GM10248 (cell line): ENCODE measurements at regions of chr7 and their contacts with region 1.

Region 1: GRCh38 chr7:24948739-24949138 is 31.2 kb downstream of the OSBPL3 start:
- DNase-seq: no peak
- CTCF ChIP-seq: no peak

Region 2: GRCh38 chr7:24936121-24936824 is 12.5 kb before region 1 on chr7:
- CTCF ChIA-PET with region 1: interaction called, 16 read pairs
- POLR2A ChIA-PET with region 1: interaction called, 5 read pairs
- DNase-seq: no peak
- CTCF ChIP-seq: no peak

Region 3: DNA sequence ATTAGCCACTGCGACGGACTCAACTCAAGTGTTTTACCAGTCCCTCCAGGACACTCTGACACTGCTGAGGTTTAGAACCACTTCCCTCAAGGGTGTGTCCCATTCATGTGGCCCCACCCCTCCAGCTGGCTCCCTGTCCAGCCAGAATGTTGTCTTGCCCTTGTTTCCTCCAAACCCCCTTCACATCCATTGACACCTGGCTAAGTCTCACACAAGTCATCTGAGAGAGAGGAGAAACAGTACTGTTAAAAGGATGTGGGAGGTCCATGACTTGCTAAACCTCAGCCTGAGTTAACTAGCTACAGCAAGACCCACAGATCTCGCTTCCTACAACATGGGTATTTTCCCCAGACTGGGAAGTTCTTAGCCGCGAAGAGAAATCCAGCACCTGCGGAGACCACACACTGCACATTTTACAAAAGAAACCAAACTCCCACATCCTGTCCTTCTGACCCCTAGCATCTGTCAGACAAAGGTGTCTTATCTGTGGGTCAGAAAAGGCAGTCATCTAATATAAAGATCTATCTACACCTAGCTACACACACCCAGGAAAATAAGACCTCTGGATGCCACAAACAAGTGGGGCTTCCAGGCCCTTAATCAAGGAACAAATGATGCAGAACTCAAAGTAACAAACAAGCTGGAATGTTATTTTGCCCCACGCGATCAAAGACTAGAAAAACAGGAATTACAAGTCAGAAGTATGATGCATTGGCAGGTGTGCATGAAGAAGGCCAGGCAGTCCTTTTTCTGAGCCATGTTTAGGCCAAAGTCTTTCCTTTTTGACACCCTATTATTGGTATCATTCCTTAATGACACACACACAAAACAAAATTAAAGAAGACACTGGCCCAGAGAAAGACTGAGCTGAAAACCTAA is 17.3 kb after region 1 on chr7:
- CTCF ChIA-PET with region 1: interaction called, 14 read pairs
- POLR2A ChIA-PET with region 1: no interaction called
- DNase-seq: peak; percentile 67
- CTCF ChIP-seq: no peak